Cardiac septum (tissue), 1 donor: ENCODE measurements at regions of chr15 and their contacts with region 1.

Region 1: DNA sequence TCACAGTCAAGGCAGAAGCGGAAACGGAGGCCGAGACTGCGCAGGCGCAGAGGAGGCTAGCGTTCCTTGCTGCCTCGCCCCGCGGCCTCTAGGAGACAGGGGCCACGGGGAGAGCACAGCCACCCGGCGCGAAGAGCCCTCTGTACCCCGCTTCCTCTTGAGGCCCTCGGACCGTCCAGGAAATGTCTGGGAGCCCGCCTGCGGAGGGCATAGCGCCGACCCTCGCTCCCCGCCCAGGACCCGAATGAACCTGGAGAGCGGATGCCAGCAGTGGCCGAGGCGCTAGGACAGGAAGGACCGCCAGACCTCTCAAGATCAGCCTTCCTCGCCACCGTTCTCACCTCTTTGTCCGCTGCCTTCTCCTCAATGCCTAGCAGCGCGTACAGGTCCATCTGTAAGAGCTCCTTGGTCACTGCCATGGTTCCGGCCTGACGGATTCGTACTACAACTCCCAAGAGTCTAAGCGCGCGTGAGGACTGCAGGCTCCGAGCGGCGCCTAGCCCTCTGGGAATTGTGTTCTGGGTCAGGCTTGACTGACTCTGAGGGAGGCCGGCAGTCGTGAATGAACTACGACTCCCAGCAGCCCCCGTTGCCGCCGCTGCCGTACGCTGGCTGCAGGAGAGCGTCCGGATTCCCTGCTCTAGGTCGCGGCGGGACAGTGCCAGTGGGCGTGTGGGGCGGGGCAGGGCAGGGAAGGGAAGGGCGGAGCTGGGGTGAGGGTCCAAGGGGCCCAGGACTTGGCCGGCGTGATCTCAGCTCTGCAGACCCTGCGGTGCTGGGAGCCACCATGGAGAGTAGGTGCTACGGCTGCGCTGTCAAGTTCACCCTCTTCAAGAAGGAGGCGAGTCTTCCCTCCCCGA is at the starts of genes DNAJC17 and ZFYVE19:
- DNase-seq: peak; percentile 99
- total RNA-seq, gene DNAJC17: 19.1 TPM
- total RNA-seq, gene ZFYVE19: 11.0 TPM

Region 2: GRCh38 chr15:40754883-40755811 is 52.1 kb before region 1 on chr15 and contains the start of gene RMDN3:
- intact Hi-C with region 1: loop called (anchors 1 kb)
- DNase-seq: peak; percentile 96
- total RNA-seq, gene RMDN3: 21.1 TPM